H1 (cell line): ENCODE measurements at regions of chr5 and their contacts with region 1.

Region 1: GRCh38 chr5:141691867-141692532 is 10.0 kb upstream of the ARAP3 start:
- DNase-seq: peak in 1 of 2 experiments; percentile 98
- H3K4me3 ChIP-seq: peak overlapping the region; percentile 19 to 60 (median 54); a peak in 7 of 8 replicates
- H3K27ac ChIP-seq: no peak overlapping the region
- H3K4me1 ChIP-seq: peaks cover 4 to 13% (median 9%) of the 10 kb centered on the region in 4 experiments
- H3K27me3 ChIP-seq: peaks cover 0 to 11% (median 2%) of the 10 kb centered on the region in 4 experiments; a peak in 2 of 7 replicates
- CTCF ChIP-seq: peak; percentile 95 to 99 (median 97)
- EP300 ChIP-seq: no peak
- POLR2A ChIP-seq: no peak
- RAD21 ChIP-seq: peak; percentile 98 to 99

Region 2: DNA sequence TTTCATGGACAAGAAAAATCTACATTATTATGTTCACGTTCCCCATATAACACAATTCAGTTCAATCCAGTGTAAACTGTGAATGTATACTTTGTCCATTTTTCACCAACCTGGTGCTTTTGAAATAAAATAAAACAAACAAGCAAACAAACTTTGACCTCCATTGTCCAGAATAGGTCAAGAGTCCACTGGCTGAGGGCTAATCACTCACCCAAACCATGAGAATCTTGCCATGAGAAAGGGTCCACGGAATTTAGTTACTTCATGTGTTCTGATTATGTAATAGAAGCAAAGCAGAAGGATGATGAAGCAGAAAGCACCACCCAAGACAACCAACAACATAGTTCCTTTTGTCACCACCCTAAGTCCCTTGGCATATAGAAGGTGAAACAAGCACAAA is 101.9 kb before region 1 on chr5:
- CTCF ChIA-PET with region 1: no interaction called
- POLR2A ChIA-PET with region 1: no interaction called
- DNase-seq: no peak
- H3K4me3 ChIP-seq: no peak overlapping the region
- H3K27ac ChIP-seq: no peak overlapping the region
- H3K4me1 ChIP-seq: no peaks in the 10 kb centered on the region
- H3K27me3 ChIP-seq: no peaks in the 10 kb centered on the region
- CTCF ChIP-seq: no peak
- EP300 ChIP-seq: no peak
- POLR2A ChIP-seq: no peak
- RAD21 ChIP-seq: no peak

Region 3: DNA sequence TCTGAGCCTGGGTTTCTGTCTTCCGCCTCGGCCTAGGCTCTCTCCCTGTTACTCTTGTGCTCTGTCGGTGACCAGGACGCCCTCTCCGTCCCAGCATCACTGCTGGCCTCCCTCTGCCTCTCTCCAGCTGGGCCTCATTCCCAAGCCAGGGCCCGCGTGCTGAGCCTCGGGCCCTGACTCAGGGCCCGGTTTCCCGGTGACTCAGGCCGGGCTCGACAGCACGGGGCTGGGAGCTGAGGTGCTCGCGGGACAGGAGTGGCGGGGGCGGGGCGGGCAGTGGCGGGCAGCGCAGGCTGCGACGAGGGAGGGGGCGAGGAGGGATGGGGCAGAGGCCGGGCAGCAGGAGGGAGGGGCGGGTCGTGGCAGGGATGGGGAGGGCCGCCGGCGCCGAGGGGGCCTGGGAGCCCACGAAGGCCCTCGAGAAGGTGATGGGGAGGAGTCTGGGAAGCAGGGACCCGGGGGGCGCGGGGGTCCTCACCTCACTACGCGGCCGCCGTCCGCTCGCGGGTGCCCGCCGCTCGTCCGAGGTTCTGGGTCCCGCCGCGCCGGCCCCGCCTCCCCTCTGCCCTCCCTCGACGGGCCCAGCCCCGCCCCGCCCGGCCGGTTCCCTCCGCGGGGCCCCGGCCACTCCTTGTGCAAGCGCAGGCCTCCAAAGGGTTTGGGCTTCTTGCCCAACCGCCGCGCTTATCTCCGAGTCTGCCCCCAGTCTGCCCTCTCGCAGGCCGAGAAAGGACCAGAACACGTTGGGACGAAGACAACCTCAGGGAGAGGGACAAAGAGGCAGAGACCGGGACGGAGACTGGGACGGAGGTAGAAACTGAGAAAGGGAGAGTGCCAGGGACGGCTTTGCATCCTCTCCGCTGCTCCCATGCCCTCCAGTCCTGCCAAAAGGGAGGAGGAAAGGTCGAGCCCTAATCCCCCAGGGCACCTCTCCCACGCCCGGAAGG is 10.0 kb before region 1 on chr5 and contains the start of gene ARAP3:
- CTCF ChIA-PET with region 1: interaction called, 28 read pairs
- POLR2A ChIA-PET with region 1: interaction called, 7 read pairs
- DNase-seq: peak in 1 of 2 experiments; percentile 88
- H3K4me3 ChIP-seq: peak within 1 kb of the TSS; percentile 60 to 73 (median 67)
- H3K27ac ChIP-seq: peak within 1 kb of the TSS; percentile 37; the same call in 1 of the 2 replicates
- H3K4me1 ChIP-seq: peaks cover 10 to 29% (median 20%) of the 10 kb centered on the region in 4 experiments
- H3K27me3 ChIP-seq: no peaks in the 10 kb centered on the region
- CTCF ChIP-seq: no peak
- EP300 ChIP-seq: no peak
- POLR2A ChIP-seq: no peak
- RAD21 ChIP-seq: no peak
- total RNA-seq, gene ARAP3: 45.7 and 48.6 TPM in 2 replicates

Region 4: GRCh38 chr5:141729387-141730006 is 37.5 kb after region 1 on chr5:
- CTCF ChIA-PET with region 1: interaction called, 23 read pairs
- POLR2A ChIA-PET with region 1: no interaction called
- DNase-seq: no peak
- H3K4me3 ChIP-seq: no peak overlapping the region
- H3K27ac ChIP-seq: no peak overlapping the region
- H3K4me1 ChIP-seq: peaks cover 1 to 11% (median 8%) of the 10 kb centered on the region in 4 experiments; a peak in 3 of 7 replicates
- H3K27me3 ChIP-seq: no peaks in the 10 kb centered on the region
- CTCF ChIP-seq: no peak
- EP300 ChIP-seq: no peak
- POLR2A ChIP-seq: no peak
- RAD21 ChIP-seq: no peak

Region 5: DNA sequence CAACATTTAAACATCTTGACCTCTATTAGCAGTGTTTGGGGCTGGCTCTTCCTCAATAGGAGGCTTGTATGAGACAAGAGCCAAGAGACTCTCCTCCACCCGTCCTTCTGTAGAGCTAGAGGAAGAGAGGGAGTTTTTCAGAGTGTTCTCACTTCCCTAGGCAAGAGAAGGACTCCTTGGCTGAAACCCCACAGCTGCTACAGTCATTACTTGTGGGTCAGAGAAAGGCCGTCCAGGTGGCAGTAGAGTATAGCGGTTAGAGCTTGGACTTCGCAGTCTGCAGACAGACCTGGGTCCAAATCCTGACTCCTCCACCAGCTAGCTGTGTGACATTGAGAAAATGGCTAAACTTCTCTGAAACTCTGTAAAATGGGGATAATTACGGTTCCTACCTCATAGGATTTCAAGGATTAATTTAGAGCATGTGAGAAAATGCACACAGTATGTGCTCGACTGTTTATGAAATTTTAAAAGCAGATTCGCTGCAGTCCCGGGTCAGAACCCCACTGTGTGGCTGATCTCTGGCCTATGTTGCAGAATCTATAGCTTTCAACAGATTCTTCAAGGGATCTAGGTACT is 70.9 kb after region 1 on chr5:
- CTCF ChIA-PET with region 1: interaction called, 98 read pairs
- POLR2A ChIA-PET with region 1: interaction called, 6 read pairs
- DNase-seq: no peak
- H3K4me3 ChIP-seq: no peak overlapping the region
- H3K27ac ChIP-seq: no peak overlapping the region
- H3K4me1 ChIP-seq: peaks cover 10 to 24% (median 21%) of the 10 kb centered on the region in 4 experiments
- H3K27me3 ChIP-seq: no peaks in the 10 kb centered on the region; a peak in 1 of 7 replicates
- CTCF ChIP-seq: peak in 1 of 3 experiments; percentile 18; a peak in 1 of 4 replicates
- EP300 ChIP-seq: no peak
- POLR2A ChIP-seq: no peak
- RAD21 ChIP-seq: peak; percentile 37 to 58; a peak in 3 of 4 replicates

Region 6: DNA sequence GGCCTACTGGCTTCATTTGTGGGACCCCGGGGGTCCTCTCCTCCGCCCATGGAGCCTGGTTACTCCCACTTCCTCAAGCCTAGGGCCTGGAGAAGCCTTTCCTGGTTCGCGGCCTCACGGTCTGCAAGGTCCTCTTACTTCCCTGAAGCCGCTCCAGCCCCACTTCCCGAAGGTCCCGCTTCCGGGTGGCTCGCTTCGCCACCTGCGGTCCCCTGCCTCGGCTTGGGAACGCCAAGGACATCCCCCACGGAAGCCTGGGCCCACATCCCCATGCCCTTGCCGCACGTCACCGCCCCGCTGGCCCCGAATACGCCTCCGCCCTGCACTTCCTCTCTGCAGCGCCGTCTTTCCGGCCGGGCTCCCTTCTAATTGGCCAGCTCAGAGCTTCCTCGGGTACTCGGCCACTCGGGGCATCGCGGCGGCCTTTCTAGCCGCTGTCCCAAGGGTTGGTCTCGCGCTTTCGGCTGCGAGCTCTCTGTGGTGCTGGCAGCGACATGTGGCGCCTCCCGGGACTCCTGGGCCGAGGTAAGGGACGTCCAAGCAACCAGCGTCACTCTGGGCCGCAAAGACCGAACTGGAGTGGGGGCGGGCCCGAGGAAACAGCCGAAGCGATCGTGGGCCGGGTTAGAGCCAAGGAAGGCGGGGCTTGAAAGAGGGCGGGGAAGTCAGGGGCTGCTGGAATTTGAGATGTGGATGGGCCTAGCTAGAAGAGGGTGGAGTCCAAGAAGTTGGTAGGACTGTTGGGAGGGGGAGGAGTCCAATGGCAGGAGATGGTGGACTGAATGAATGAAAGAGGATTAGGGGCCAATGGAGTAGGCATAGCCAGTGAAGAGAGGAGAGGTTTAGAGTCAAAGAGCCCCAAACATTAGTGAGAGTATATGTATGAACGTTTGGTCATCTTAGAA is 231.7 kb after region 1 on chr5 and contains the start of gene DELE1:
- CTCF ChIA-PET with region 1: interaction called, 21 read pairs
- POLR2A ChIA-PET with region 1: interaction called, 5 read pairs
- DNase-seq: peak; percentile 69 to 90
- H3K4me3 ChIP-seq: peak within 1 kb of the TSS; percentile 68 to 84 (median 74)
- H3K27ac ChIP-seq: peak within 1 kb of the TSS; percentile 71; the same call in 1 of the 2 replicates
- H3K4me1 ChIP-seq: peaks cover 0 to 3% (median 3%) of the 10 kb centered on the region in 4 experiments; a peak in 3 of 7 replicates
- H3K27me3 ChIP-seq: no peaks in the 10 kb centered on the region
- CTCF ChIP-seq: peak in 1 of 3 experiments; percentile 5; a peak in 1 of 4 replicates
- EP300 ChIP-seq: no peak
- POLR2A ChIP-seq: peak in 1 of 2 experiments; percentile 84; a peak in 2 of 3 replicates
- RAD21 ChIP-seq: peak in 1 of 2 experiments; percentile 9; a peak in 1 of 4 replicates
- total RNA-seq, gene DELE1: 59.6 and 61.4 TPM in 2 replicates

Region 7: DNA sequence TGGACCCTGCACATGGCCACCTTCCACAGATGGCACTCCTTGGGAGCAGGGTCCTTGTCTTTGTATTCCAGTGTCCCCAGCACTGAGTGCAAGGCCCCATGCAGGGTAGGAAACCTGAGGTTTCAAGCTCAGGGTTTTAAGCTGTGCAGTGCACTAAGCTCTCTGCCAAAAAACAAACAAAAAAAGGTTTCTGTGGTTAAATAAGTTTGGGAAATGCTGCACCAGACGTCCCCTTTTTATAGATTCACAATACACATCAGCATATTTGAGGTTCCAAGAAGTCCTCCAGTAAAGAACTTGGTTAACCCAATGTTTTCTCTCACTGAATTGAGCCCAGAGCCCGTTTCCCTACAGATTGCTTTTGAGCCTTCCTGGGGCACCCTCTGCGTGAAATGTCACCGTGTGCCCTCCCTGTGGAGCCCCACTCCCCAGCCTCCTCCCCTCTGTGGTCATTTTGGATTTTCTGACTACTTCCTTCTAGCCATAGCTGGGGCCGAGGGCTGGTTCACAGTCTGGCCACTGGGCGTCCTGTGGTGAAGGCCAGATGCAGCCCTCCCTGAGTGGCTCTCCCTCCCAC is 248.8 kb after region 1 on chr5:
- CTCF ChIA-PET with region 1: interaction called, 21 read pairs
- POLR2A ChIA-PET with region 1: interaction called, 3 read pairs
- DNase-seq: no peak
- H3K4me3 ChIP-seq: no peak overlapping the region
- H3K27ac ChIP-seq: no peak overlapping the region
- H3K4me1 ChIP-seq: peaks cover 0 to 9% (median 7%) of the 10 kb centered on the region in 4 experiments; a peak in 5 of 7 replicates
- H3K27me3 ChIP-seq: no peaks in the 10 kb centered on the region; a peak in 1 of 7 replicates
- CTCF ChIP-seq: no peak
- EP300 ChIP-seq: no peak
- POLR2A ChIP-seq: no peak
- RAD21 ChIP-seq: no peak

Region 8: DNA sequence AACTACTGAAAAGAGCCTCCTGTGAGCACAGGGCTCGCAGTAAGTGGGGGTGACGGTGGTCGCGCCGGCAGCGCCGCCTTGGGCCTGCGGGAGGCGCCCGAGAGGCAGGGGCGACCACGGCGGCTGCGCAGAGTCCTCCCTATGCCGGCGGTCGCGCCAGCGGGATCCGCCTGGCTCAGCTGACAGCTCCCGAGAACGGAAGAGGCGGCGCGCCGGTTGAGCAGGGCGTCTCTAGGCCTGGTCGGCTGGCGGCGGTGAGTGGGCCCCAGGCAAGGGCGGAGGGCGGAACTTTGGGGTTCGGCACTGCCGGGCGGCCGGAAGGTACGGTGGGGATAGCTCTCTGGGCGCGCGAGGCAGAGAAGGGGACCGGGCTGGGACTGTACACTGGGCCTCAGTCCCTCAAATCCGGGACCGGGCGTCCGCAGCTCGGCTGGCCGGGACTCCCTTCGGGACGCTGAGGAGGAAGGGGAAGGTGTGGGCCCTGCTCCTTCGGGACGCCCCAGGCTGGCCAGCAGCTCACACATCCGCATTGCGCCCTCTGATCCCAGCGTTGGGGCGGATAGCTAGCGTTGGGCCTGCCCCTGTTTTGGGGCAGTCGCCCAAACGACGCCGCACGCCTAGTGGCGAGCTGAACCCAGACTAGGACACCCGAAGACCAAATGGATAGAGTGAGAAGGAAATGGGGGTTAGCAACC is 277.1 kb after region 1 on chr5 and contains the start of gene RNF14:
- CTCF ChIA-PET with region 1: interaction called, 28 read pairs
- POLR2A ChIA-PET with region 1: no interaction called
- DNase-seq: peak; percentile 89 to 97
- H3K4me3 ChIP-seq: peak within 1 kb of the TSS; percentile 63 to 77 (median 70)
- H3K27ac ChIP-seq: peak within 1 kb of the TSS; percentile 74
- H3K4me1 ChIP-seq: peaks cover 0 to 6% (median 3%) of the 10 kb centered on the region in 4 experiments; a peak in 3 of 7 replicates
- H3K27me3 ChIP-seq: no peaks in the 10 kb centered on the region
- CTCF ChIP-seq: peak; percentile 87 to 90 (median 88)
- EP300 ChIP-seq: no peak; a peak in 1 of 3 replicates
- POLR2A ChIP-seq: peak in 1 of 2 experiments; percentile 52; a peak in 1 of 3 replicates
- RAD21 ChIP-seq: peak; percentile 19 to 42; a peak in 3 of 4 replicates
- total RNA-seq, gene RNF14: 19.6 and 20.2 TPM in 2 replicates